Heart right ventricle (tissue), 16 donors: ENCODE measurements at regions of chr3 and their contacts with region 1.

Region 1: GRCh38 chr3:124084022-124084881 is 92.3 kb upstream of the ROPN1 start:
- DNase-seq: peak in 1 of 2 donors; percentile 55
- ATAC-seq: peak in 7 of 8 donors; percentile 34 to 84 (median 67)
- H3K4me3 ChIP-seq: no peak overlapping the region
- H3K27ac ChIP-seq: peak overlapping the region in 9 of 10 donors; percentile 15 to 51 (median 38)
- H3K4me1 ChIP-seq: peaks cover 0 to 41% (median 16%) of the 10 kb centered on the region in 9 donors
- H3K27me3 ChIP-seq: no peaks in the 10 kb centered on the region
- CTCF ChIP-seq: no peak

Region 2: GRCh38 chr3:124026516-124026915 is 57.7 kb before region 1 on chr3:
- intact Hi-C with region 1: loop called in 8 of 10 experiments (anchors 5 kb)
- DNase-seq: no peak
- ATAC-seq: no peak
- H3K4me3 ChIP-seq: no peak overlapping the region
- H3K27ac ChIP-seq: no peak overlapping the region
- H3K4me1 ChIP-seq: no peaks in the 10 kb centered on the region
- H3K27me3 ChIP-seq: peaks cover 0 to 48% (median 0%) of the 10 kb centered on the region in 7 donors
- CTCF ChIP-seq: no peak